Lower lobe of right lung (tissue), 2 donors: ENCODE measurements at regions of chr14 and their contacts with region 1.

Region 1: DNA sequence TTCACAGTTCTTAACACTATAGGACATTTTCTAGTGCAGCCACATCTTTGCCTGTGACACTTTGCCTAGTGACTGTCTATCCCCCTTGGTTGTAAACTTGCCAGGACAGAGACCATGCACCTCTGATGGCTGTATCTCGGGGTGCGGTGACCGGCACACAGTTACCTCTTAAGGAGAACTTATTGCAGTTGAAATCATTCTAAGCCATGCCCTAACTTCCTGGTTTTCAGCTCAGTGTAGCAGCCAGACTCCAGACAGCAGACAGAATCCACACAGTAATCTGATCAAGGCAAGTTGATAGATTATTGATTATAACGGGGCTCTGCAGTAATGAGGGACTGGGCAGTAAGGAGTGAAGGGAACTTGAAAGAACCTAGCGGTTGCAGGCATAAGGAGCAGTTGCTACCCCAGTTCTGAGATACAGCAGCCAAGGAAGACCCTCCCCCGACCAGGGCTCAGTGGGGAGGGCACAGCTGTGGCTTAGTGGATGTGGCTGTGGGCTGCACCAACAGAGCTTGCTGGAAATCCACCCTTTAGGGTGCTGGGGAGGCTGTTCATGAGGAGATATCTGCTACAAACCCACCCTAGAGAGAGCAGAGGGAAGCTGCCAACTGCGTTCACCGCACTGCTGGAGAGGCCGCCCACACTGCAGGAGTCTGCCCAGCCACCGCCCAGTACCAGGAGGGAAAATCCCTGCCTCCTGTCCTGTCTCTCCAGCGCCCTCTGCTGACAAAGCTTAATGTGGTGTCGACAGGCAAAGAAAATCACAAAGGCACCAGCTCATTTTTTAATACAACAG is 58.2 kb upstream of the BEGAIN start:
- DNase-seq: peak; percentile 91
- ATAC-seq: peak; percentile 93 to 94
- H3K4me3 ChIP-seq: no peak overlapping the region
- H3K27ac ChIP-seq: no peak overlapping the region
- H3K4me1 ChIP-seq: peaks cover 8% of the 10 kb centered on the region
- H3K27me3 ChIP-seq: no peaks in the 10 kb centered on the region
- CTCF ChIP-seq: peak; percentile 85

Region 2: DNA sequence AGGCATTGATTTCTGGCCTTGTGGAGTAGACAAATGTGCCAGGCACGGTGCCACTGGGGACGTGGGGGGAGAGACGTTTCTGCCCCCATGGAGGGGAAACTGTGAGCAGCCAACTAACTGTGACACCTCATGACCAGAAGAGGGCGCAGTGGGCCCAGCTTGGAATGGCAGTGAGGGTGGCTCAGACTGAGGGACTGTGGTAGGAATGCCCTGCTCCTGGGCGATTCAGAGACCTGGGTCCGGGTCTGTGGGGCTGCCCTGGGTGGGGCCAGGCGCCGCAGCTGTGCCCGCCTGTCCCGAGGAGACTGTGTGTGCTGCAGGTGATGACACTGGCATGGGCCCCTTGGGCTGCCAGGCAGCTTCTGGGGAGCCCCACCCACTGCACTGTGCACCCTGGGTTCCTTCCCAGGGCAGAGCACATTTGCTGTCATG is 261.6 kb before region 1 on chr14:
- intact Hi-C with region 1: loop called (anchors 10 kb)
- DNase-seq: peak; percentile 77
- ATAC-seq: peak; percentile 87 to 88
- H3K4me3 ChIP-seq: no peak overlapping the region
- H3K27ac ChIP-seq: no peak overlapping the region
- H3K4me1 ChIP-seq: peaks cover 40% of the 10 kb centered on the region
- H3K27me3 ChIP-seq: no peaks in the 10 kb centered on the region
- CTCF ChIP-seq: peak; percentile 89